WTC11 (cell line): ENCODE measurements at regions of chr19 and their contacts with region 1.

Region 1: DNA sequence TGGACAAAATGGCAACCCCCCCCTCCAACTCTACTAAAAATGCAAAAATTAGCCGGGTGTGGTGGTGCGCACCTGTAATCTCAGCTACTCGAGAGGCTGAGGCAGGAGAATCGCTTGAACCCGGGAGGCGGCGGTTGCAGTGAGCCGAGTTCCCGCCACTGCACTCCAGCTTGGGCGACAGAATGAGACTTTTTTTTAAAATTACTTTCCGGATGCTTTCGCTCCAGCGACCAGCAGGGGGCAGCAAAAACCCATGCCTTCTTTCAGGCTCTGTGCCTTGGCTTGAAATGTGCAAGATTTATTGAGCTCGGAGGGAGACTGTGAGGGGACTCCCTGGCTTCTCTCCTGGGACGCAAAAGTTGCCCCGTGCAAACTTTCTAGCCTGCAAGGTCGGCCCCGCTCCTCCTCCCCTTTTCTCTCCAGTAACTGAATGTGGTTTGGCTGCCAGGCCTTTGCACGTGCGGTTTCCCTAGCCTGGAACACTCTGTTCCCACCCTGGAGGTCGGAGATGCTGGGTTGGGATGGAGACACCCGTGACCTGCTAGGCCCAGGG is 61.4 kb upstream of the NFIC start:
- DNase-seq: peak; percentile 81
- ATAC-seq: peak; percentile 57
- H3K4me3 Mint-ChIP-seq: no peak overlapping the region
- H3K27ac Mint-ChIP-seq: no peak overlapping the region
- H3K4me1 Mint-ChIP-seq: no peaks in the 10 kb centered on the region
- H3K27me3 Mint-ChIP-seq: peaks cover 29% of the 10 kb centered on the region
- CTCF ChIP-seq: peak; percentile 76

Region 2: DNA sequence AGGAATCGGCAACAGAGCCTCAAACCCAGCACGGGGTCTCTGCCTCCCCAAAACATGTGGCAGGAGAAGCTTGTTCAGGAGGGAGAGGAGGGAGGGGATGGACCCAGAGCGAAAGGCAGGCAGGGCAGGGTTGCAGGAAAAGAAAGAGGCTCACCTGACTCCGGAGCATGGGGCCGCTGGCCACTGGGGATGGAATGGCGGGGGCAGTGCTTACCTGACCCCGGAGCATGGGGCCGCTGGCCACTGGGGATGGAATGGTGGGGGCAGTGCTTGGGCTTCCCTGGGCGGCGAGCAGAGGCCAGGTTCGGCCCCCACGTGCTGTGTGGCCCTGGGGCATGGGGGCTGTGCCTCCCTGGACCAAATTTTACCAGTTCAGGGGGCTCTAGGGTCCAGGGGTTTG is 93.8 kb before region 1 on chr19:
- CTCF ChIA-PET with region 1: no interaction called
- POLR2A ChIA-PET with region 1: no interaction called
- DNase-seq: no peak
- ATAC-seq: peak; percentile 7
- H3K4me3 Mint-ChIP-seq: no peak overlapping the region
- H3K27ac Mint-ChIP-seq: no peak overlapping the region
- H3K4me1 Mint-ChIP-seq: peaks cover 3% of the 10 kb centered on the region; the same call in 1 of the 2 replicates
- H3K27me3 Mint-ChIP-seq: no peaks in the 10 kb centered on the region
- CTCF ChIP-seq: no peak

Region 3: DNA sequence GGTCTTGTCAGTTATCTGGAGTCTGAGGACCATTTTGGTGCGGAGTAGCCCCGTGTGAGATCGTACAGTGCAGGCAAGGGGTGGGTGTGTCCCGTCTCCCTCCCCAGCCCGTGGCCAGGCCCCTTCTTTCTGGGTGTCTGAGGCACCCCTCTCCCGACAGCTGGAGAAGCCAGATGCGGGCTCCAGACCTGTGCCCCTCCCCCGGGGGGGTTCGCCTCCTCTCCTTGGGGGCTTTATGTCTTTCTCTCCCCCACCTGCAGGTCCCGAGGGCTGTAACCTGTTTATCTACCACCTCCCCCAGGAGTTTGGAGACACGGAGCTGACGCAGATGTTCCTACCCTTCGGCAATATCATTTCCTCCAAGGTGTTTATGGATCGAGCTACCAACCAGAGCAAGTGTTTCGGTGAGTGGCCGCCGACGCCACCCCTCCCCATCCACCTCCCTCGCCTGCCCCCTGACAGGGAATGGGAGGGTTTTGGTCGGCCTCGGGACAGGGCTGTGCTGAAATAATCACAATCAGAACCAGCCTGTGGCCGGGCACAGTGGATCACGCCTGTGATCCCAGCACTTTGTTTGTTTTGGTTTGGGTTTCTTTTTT is 14.9 kb before region 1 on chr19:
- CTCF ChIA-PET with region 1: interaction called, 17 read pairs
- POLR2A ChIA-PET with region 1: no interaction called
- DNase-seq: no peak
- ATAC-seq: no peak
- H3K4me3 Mint-ChIP-seq: no peak overlapping the region
- H3K27ac Mint-ChIP-seq: no peak overlapping the region
- H3K4me1 Mint-ChIP-seq: no peaks in the 10 kb centered on the region; the same call in 1 of the 2 replicates
- H3K27me3 Mint-ChIP-seq: peaks cover 3% of the 10 kb centered on the region; the same call in 1 of the 2 replicates
- CTCF ChIP-seq: no peak

Region 4: GRCh38 chr19:3330047-3330446 is 25.1 kb after region 1 on chr19:
- CTCF ChIA-PET with region 1: interaction called, 10 read pairs
- POLR2A ChIA-PET with region 1: no interaction called
- DNase-seq: no peak
- ATAC-seq: no peak
- H3K4me3 Mint-ChIP-seq: no peak overlapping the region
- H3K27ac Mint-ChIP-seq: no peak overlapping the region
- H3K4me1 Mint-ChIP-seq: no peaks in the 10 kb centered on the region
- H3K27me3 Mint-ChIP-seq: peaks cover 37% of the 10 kb centered on the region
- CTCF ChIP-seq: no peak

Region 5: DNA sequence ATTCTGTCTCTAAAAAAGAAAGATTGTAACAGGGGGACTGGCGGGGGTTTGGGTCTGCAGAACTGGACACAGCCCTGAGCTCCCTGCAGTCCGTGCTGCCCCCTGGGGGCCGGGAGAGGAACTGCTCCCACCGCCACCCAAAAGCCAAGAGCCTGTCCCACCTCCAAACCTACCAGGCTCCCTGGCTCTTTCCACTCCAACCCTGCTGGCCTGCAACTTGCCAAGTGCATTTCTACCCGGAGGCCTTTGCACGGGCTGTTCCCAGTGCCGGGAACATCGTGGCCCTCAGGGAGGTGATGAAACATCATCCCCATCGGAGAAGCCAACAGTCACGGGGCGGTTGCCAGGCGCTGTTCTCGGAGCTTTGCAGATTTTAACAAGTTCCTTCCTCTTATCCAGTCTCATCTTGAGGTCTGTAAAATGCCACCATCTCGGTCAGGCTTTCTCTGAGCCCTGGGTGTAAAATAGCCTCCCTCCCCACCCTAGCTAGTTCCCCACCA is 124.7 kb after region 1 on chr19:
- CTCF ChIA-PET with region 1: interaction called, 16 read pairs
- POLR2A ChIA-PET with region 1: no interaction called
- DNase-seq: peak; percentile 94
- ATAC-seq: peak; percentile 90
- H3K4me3 Mint-ChIP-seq: no peak overlapping the region
- H3K27ac Mint-ChIP-seq: no peak overlapping the region
- H3K4me1 Mint-ChIP-seq: peaks cover 6% of the 10 kb centered on the region
- H3K27me3 Mint-ChIP-seq: peaks cover 8% of the 10 kb centered on the region
- CTCF ChIP-seq: peak; percentile 99

Region 6: GRCh38 chr19:3479177-3479833 is 174.4 kb after region 1 on chr19:
- CTCF ChIA-PET with region 1: interaction called, 63 read pairs
- POLR2A ChIA-PET with region 1: no interaction called
- DNase-seq: peak; percentile 79
- ATAC-seq: peak; percentile 47
- H3K4me3 Mint-ChIP-seq: no peak overlapping the region; the same call in 1 of the 2 replicates
- H3K27ac Mint-ChIP-seq: no peak overlapping the region
- H3K4me1 Mint-ChIP-seq: peaks cover 20% of the 10 kb centered on the region
- H3K27me3 Mint-ChIP-seq: peaks cover 6% of the 10 kb centered on the region
- CTCF ChIP-seq: no peak